B cell (primary cell): ENCODE measurements at regions of chr9 and their contacts with region 1.

Region 1: DNA sequence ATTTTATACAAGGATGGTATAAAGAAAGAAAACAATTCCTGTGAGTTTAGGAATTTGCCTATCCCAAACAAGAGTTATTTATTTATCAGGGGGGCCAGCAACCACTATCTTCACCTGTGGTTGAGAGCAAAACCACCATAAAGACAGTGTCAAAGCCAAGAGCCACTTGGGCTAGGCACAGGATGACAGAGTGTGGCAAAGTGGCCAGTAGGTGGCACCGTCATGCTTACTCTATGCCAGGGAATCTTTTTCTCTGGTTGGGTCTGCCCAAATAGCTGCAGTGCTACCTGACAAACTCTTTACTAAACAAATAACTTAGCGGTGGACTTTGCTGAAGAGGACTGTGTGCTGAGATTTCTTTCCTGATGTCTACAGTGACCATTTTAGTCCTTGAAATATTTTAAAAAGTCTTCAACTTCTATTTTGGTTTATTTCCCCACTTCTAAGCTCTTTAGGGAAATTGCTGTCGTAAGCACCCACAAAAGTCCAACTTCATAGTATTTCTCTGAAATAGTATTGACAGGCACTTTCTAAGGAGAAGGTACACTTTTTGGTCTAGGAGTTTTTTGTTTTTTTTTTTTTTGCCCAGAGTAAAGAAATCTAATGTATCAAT is 285.0 kb downstream of the RFX3 start:
- DNase-seq: peak; percentile 71
- ATAC-seq: peak; percentile 79
- H3K4me3 ChIP-seq: no peak overlapping the region
- H3K4me3 Mint-ChIP-seq: no peak overlapping the region
- H3K27ac ChIP-seq: no peak overlapping the region
- H3K27ac Mint-ChIP-seq: no peak overlapping the region
- H3K4me1 ChIP-seq: no peaks in the 10 kb centered on the region
- H3K4me1 Mint-ChIP-seq: no peaks in the 10 kb centered on the region
- H3K27me3 ChIP-seq: no peaks in the 10 kb centered on the region
- H3K27me3 Mint-ChIP-seq: no peaks in the 10 kb centered on the region
- CTCF ChIP-seq: peak; percentile 78

Region 2: GRCh38 chr9:3224931-3225330 is 15.8 kb before region 1 on chr9:
- CTCF ChIA-PET with region 1: interaction called, 15 read pairs
- POLR2A ChIA-PET with region 1: no interaction called
- intact Hi-C with region 1: no loop called
- DNase-seq: no peak
- ATAC-seq: no peak
- H3K4me3 ChIP-seq: no peak overlapping the region
- H3K4me3 Mint-ChIP-seq: no peak overlapping the region
- H3K27ac ChIP-seq: no peak overlapping the region
- H3K27ac Mint-ChIP-seq: no peak overlapping the region
- H3K4me1 ChIP-seq: no peaks in the 10 kb centered on the region
- H3K4me1 Mint-ChIP-seq: no peaks in the 10 kb centered on the region
- H3K27me3 ChIP-seq: no peaks in the 10 kb centered on the region
- H3K27me3 Mint-ChIP-seq: no peaks in the 10 kb centered on the region
- CTCF ChIP-seq: no peak

Region 3: GRCh38 chr9:4117835-4118610 is 877.3 kb after region 1 on chr9:
- CTCF ChIA-PET with region 1: interaction called, 4 read pairs
- POLR2A ChIA-PET with region 1: no interaction called
- intact Hi-C with region 1: loop called (anchors 2 kb)
- DNase-seq: peak; percentile 42
- ATAC-seq: no peak
- H3K4me3 ChIP-seq: no peak overlapping the region
- H3K4me3 Mint-ChIP-seq: no peak overlapping the region
- H3K27ac ChIP-seq: no peak overlapping the region
- H3K27ac Mint-ChIP-seq: no peak overlapping the region
- H3K4me1 ChIP-seq: no peaks in the 10 kb centered on the region
- H3K4me1 Mint-ChIP-seq: no peaks in the 10 kb centered on the region
- H3K27me3 ChIP-seq: no peaks in the 10 kb centered on the region
- H3K27me3 Mint-ChIP-seq: peaks cover 3% of the 10 kb centered on the region
- CTCF ChIP-seq: peak; percentile 65